GM13977 (cell line): ENCODE measurements at regions of chr2 and their contacts with region 1.

Region 1: DNA sequence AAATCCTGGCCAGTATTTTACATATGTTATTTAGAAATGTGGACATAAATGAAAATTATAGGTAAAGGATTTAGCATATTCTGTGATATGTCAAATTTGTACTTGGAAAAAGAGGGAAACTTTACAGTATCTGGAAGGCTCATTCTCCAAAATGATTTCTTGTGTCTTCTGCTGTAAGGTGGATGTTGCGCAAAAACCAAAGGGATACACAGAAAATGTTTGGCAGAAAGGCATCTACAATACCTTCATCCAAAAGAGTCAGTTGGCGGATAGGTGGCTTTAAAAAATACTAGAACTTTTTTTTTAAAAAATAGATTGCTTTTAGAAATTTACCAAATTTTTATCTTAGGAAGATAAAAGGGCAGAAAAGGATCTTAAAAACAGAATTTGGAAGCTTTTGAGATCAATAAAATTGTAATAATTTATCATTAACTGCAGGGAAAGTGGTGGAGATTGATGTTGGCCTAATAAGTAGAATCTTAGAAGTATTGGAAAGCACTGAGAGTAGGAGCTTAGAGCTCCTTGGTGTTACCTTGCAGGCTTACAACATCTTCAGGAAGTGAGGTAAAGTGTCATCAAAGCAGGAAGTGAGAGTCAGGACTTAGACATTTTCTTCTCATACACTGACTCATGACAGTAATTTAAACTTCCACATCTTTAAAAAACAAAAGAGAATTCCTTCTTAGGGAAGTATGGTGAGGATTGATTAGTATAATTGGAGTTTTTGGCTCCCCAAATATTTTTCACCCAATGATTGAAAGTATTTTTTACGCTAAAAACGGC is 2.1 kb downstream of the NABP1 start:
- DNase-seq: peak; percentile 47
- CTCF ChIP-seq: no peak

Region 2: DNA sequence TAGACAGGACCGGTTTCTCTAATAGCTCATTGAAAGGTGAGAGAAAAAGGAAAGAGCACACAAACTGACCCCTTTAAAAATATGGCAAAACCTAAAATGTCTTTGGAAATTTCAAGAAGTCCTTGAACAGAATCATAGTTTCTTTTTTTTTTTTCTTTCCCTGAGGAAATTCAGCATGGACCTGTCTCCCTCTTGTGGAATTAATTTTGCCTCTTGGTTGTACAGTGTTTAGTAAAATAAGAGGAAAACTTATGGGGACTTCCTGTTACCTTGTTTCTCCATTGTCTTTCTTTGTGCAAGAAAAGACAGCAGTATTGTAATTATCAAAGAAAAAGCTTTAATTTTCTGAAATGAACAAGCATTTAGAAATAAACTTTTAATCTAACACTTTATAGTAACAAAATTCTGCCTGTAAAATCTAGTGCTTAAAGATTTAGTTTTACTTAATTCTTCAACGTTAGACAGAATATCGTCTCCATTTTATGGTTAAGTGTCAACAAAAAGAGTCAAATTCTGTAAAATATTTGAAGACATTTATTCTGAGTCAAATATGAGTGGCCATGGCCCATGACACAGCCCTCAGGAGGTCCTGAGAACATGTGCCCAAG is 178.3 kb before region 1 on chr2:
- in situ Hi-C with region 1: no loop called
- DNase-seq: no peak
- CTCF ChIP-seq: peak; percentile 9

Region 3: DNA sequence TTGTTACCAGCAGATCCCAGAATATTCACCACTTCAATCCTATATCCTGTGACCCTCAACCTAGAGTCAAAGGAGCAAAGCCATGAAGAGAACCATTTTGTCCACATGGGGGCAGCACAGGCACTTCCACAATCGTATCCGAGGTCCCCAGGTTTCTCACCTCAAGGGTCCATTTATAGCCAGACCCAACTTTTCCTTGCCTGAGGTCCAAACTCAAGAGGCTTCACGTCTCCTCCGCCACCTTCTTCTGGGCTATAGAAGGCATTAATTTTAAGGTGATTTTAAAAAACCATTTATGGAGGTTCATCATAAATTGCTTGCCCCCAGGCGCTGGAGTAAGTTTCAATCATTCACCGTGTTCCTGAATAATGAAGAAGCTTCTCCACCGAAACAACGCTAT is 113.7 kb before region 1 on chr2:
- in situ Hi-C with region 1: loop called (anchors 10 kb)
- DNase-seq: peak; percentile 59
- CTCF ChIP-seq: peak; percentile 87

Region 4: DNA sequence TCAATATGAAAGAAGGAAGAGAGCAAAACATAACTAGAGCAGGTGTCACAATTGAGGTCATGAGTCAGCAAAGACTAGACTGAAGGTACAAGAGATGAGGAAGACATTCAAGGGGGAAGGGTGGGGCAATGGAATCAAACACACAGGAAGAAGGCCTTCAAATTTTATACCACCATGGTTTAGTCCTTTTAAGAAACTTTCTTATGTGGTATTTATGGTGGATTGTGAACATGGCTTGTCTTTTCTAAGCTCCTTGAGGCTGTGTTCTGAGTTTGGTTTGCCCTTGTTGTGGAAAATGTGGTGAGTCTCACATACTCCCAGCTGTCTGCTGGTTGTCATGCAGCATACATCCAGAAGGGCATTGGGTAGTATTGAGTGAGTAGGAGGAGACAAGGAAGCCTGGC is 60.0 kb after region 1 on chr2:
- in situ Hi-C with region 1: no loop called
- DNase-seq: peak; percentile 56
- CTCF ChIP-seq: no peak